OCI-LY7 (cell line): ENCODE measurements at regions of chr10 and their contacts with region 1.

Region 1: DNA sequence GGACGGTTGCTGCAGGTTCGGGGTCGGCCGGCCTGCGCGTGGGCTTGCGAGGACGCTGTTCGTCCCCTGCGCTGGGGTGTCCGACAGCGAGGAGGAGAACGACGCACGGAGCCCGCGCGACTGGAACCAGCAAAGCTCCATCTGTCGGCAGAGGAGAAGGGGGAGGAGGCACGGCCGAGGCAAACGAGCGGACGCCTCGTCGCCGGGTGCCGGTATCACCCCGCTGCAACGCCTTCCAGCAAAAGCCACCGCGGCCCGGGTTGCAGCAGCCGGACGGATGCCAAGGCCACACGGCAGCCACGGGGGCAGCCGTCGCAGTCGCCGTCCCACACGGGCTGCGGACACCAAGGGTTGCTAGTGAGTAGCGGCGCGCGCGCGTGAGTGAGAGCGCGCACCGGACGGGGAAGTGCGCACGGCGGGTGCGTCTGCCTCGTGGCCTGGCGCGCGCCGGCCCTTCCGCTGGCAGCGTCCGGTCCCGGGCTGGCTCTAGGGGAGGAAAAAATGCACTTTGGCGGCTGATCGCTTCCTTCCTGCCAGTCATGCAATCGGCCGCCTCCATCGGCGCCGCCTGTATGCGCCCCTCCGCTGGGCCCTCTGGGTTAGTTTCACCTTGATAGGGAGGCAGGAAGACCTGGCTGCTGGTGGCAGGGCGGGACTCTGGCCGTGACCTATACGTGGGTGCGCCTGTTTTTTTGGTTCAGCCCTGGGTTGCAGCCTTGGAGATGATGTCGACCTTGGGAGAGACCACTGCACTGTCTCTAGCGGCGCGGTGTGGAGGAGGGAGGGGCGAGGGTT is 434 bp downstream of the STAMBPL1 start:
- DNase-seq: peak; percentile 91
- H3K4me3 ChIP-seq: peak overlapping the region; percentile 80
- H3K27ac ChIP-seq: peak overlapping the region; percentile 93
- H3K4me1 ChIP-seq: peaks cover 64% of the 10 kb centered on the region
- CTCF ChIP-seq: peak; percentile 43; the same call in 1 of the 2 replicates

Region 2: GRCh38 chr10:87817609-87818504 is 1062.6 kb before region 1 on chr10 and contains the start of gene ATAD1:
- CTCF ChIA-PET with region 1: no interaction called
- POLR2A ChIA-PET with region 1: no interaction called
- intact Hi-C with region 1: loop called (anchors 5 kb)
- DNase-seq: peak; percentile 93
- H3K4me3 ChIP-seq: peak within 1 kb of the TSS; percentile 86
- H3K27ac ChIP-seq: peak within 1 kb of the TSS; percentile 79
- H3K4me1 ChIP-seq: peaks cover 28% of the 10 kb centered on the region
- CTCF ChIP-seq: peak; percentile 28; the same call in 1 of the 2 replicates
- total RNA-seq, gene ATAD1: 17.7 and 19.6 TPM in 2 replicates

Region 3: DNA sequence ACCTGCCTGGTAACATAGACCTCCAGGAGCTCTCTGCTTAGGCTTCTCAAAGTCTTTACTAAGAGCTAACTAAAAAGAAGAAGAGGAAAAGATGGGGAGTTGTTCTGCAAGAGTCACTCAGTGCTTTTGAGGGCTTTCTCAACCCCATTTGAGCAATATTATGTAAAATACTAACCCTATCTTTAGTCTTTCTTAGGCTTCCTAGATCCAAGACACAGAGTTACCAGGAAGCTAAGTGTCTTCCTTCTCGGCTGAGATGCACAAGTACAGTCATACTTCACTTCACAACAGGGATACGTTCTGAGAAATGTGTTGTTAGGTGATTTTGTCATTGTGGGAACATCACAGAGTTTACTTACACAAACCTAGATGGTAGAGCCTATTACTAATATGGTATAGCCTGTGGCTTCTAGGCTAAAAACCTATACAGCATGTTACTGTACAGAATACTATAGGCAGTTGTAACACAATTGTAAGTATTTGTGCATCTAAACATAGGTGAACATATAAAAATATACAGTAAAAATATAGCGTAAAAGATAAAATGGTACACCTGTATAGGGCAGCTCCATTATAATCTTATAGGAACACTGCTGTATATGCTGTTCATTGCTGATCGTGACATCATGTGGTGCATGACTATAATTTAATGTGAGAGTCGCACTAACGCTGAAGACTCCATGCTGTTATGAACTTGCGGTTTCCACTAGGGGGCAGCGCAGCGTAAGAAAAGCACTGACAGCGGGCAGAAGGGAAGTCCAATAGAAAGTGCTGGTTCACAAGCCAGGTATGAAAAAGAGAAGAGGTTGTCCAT is 45.2 kb before region 1 on chr10:
- CTCF ChIA-PET with region 1: no interaction called
- POLR2A ChIA-PET with region 1: interaction called, 24 read pairs
- intact Hi-C with region 1: loop called (anchors 2 kb)
- DNase-seq: peak; percentile 88
- H3K4me3 ChIP-seq: no peak overlapping the region
- H3K27ac ChIP-seq: no peak overlapping the region
- H3K4me1 ChIP-seq: peaks cover 15% of the 10 kb centered on the region
- CTCF ChIP-seq: peak; percentile 99

Region 4: GRCh38 chr10:88895250-88895649 is 14.8 kb after region 1 on chr10:
- CTCF ChIA-PET with region 1: interaction called, 3 read pairs
- POLR2A ChIA-PET with region 1: interaction called, 201 read pairs
- intact Hi-C with region 1: no loop called
- DNase-seq: no peak
- H3K4me3 ChIP-seq: no peak overlapping the region
- H3K27ac ChIP-seq: no peak overlapping the region
- H3K4me1 ChIP-seq: peaks cover 61% of the 10 kb centered on the region
- CTCF ChIP-seq: no peak

Region 5: GRCh38 chr10:88932539-88933256 is 52.2 kb after region 1 on chr10:
- CTCF ChIA-PET with region 1: no interaction called
- POLR2A ChIA-PET with region 1: interaction called, 7 read pairs
- intact Hi-C with region 1: loop called (anchors 2 kb)
- DNase-seq: peak; percentile 85
- H3K4me3 ChIP-seq: no peak overlapping the region
- H3K27ac ChIP-seq: no peak overlapping the region
- H3K4me1 ChIP-seq: peaks cover 32% of the 10 kb centered on the region
- CTCF ChIP-seq: peak; percentile 94